Ascending aorta (tissue), 2 donors: ENCODE measurements at regions of chr11 and their contacts with region 1.

Region 1: GRCh38 chr11:130609121-130610035 is 160.9 kb downstream of the ADAMTS15 start:
- DNase-seq: peak; percentile 70 to 95
- H3K4me3 ChIP-seq: no peak overlapping the region
- H3K27ac ChIP-seq: peak overlapping the region; percentile 88 to 91
- H3K4me1 ChIP-seq: peaks cover 10 to 47% of the 10 kb centered on the region in 2 donors
- H3K27me3 ChIP-seq: no peaks in the 10 kb centered on the region
- CTCF ChIP-seq: no peak

Region 2: DNA sequence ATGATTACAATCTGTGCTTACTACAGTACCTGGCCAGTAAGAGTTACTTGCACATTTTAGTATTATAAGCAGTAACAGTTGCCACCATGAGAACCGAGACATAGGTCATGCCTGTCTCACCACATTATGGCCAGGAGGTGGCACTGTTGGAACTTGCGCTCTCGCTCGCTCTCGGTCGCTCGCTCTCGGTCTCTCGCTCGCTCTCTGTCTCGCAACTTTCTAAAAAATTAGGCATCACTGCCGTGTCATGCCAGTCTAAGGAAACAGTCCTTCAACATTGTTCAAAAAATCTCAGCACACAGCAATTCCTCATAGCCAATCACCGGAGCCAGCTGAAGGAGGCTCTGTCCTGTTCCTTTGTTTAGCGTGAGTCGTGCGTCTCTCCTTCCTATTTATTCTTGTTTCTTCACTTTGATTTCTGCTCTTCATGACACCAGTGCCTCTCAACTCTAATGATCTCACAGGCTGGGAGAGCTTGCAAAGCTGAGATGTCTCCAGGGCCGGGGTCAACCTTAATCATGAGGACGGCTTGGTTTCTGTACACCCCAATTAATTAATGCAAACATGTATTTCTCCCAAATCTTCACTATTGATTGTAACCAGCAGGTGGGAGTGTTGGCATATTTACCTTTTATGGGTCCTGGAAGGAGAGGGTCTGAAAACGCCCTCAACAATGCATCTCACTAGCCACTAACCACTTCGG is 174.7 kb before region 1 on chr11:
- intact Hi-C with region 1: loop called (anchors 2 kb)
- DNase-seq: peak in 1 of 2 donors; percentile 82
- H3K4me3 ChIP-seq: peak overlapping the region; percentile 53 to 71
- H3K27ac ChIP-seq: peak overlapping the region; percentile 64 to 81
- H3K4me1 ChIP-seq: peaks cover 0 to 3% of the 10 kb centered on the region in 2 donors
- H3K27me3 ChIP-seq: no peaks in the 10 kb centered on the region
- CTCF ChIP-seq: peak; percentile 68 to 79 (median 77)

Region 3: DNA sequence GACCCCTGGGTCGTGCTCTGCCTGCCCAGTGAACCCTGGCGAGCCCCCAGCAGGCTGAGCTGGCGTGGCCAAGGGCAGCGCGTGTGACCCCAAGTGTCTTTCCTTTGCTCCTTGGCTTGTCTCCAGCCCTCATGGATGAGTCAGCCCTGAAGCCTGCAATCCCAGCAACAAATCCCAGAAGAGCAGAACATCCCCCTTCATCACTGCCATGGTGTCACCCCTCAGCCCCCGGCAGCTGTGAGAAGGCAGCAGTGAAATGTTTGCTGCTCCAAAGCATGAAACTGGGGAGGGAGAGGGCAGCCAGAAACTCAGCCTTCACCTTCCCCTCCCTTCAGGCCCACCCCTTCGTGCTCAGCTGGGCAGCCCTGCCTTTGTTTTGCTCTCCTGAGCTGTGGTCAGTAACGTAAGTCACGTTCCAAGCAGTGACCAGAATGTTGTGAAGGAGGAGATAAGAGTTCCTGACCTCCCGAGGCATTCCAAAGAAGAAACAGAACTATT is 131.1 kb before region 1 on chr11:
- intact Hi-C with region 1: loop called (anchors 5 kb)
- DNase-seq: peak in 1 of 2 donors; percentile 89
- H3K4me3 ChIP-seq: no peak overlapping the region
- H3K27ac ChIP-seq: peak overlapping the region; percentile 75 to 86
- H3K4me1 ChIP-seq: peaks cover 11 to 31% of the 10 kb centered on the region in 2 donors
- H3K27me3 ChIP-seq: no peaks in the 10 kb centered on the region
- CTCF ChIP-seq: no peak

Region 4: DNA sequence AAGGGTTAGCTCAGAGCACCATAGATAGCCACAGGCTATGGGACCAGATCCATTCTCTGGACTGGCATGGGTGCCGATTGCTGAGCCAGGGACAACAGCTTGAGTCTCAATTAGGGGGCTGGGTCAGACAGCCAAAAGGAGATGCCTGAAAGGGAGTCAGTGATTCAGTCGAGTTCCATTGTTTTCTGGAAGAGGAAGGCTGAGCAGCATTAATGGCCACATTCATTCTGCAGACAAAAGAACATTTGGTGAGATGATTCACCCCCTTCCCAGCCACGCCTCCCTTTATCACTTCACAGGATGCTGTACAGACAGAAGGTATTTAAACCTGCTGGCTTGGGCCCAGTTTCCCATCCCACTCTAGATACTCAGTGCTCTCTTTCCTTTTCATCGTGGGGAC is 29.0 kb before region 1 on chr11:
- intact Hi-C with region 1: loop called (anchors 2 kb)
- DNase-seq: no peak
- H3K4me3 ChIP-seq: no peak overlapping the region
- H3K27ac ChIP-seq: peak overlapping the region; percentile 67 to 74
- H3K4me1 ChIP-seq: peaks cover 0 to 15% of the 10 kb centered on the region in 2 donors
- H3K27me3 ChIP-seq: no peaks in the 10 kb centered on the region
- CTCF ChIP-seq: no peak

Region 5: DNA sequence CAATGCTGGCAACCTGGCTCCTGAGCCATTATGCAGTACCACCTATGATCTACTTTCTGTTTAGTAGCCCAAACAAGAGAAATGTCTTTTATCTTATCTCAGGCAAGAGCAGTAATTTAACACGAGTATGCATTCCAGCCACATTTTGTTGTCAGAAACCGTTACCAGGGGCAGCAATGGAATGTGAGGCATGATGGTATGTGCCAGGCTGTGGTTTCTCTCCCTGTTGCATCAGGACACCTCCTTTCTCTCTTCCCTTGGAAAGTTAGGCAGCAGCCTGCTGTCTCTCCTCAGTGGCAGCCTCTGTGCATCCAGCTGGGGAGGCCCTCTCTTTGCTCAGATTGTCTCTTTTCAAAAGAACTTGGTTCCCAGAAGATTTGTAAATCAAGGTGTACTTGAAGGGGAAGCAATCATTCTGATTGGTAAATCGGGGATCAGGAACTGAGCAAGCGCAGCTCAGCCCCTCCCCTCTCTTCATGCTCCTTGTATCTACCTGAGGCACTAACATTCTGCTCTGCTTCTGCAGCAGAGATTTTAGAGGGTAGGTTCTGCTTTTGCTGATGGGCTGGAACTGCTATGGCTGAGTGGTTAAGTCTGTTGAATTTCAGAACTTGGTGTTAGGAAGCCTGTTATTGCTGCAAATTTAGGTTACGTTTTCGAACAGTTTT is 68.2 kb after region 1 on chr11:
- intact Hi-C with region 1: loop called (anchors 2 kb)
- DNase-seq: no peak
- H3K4me3 ChIP-seq: no peak overlapping the region
- H3K27ac ChIP-seq: peak overlapping the region; percentile 92 to 94
- H3K4me1 ChIP-seq: peaks cover 14 to 49% of the 10 kb centered on the region in 2 donors
- H3K27me3 ChIP-seq: no peaks in the 10 kb centered on the region
- CTCF ChIP-seq: no peak

Region 6: GRCh38 chr11:130894322-130895025 is 285.1 kb after region 1 on chr11:
- intact Hi-C with region 1: loop called (anchors 5 kb)
- DNase-seq: peak in 1 of 2 donors; percentile 88
- H3K4me3 ChIP-seq: no peak overlapping the region
- H3K27ac ChIP-seq: peak overlapping the region; percentile 86 to 93
- H3K4me1 ChIP-seq: peaks cover 27 to 60% of the 10 kb centered on the region in 2 donors
- H3K27me3 ChIP-seq: no peaks in the 10 kb centered on the region
- CTCF ChIP-seq: peak; percentile 80 to 86 (median 81)